A673 (cell line): ENCODE measurements at regions of chr4 and their contacts with region 1.

Region 1: DNA sequence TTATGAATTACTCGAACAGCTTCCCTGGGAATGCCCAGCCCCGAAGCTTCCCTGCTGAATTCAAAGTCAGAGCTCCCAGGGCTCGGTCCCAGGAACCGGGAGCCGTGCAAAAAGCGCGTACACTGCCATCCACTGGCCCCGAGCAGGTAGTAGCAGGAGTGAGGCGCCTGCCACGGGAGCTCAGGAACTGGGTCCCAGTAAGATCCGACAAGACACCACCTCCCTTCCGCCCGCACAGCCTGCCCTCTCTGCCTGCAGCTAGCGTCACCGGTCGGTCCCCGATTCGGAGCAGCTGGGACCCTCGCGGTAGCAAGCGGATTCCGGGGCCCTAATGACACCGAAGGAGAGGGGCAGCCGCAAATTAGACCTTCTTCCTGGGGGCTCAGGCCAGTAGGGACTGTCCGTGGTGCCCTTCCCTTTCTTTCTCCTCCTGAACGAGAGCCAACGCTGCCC is 1.2 kb downstream of the CORIN start:
- DNase-seq: peak; percentile 90
- H3K4me3 ChIP-seq: peak overlapping the region; percentile 51
- H3K27ac ChIP-seq: no peak overlapping the region
- H3K4me1 ChIP-seq: peaks cover 11% of the 10 kb centered on the region
- H3K27me3 ChIP-seq: no peaks in the 10 kb centered on the region
- CTCF ChIP-seq: peak; percentile 77

Region 2: DNA sequence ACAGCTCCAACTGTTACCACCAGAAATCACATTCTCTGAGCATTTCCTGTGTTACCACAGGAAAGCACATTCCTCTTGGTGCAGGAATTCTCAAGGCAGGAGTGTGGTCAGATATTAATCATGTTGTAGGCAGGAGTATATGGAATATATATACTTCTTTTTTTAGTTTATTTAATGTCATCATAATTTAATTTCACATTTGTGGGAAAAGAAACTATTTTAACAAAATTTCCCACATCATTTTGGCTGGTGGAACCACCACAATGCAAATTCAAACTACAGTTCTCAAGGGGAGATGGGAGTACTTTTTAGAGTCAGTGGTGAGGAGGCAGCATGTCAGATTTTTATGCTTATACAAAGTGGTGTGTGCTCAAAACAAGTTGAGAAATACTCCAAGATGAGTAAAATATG is 212.6 kb before region 1 on chr4:
- CTCF ChIA-PET with region 1: no interaction called
- POLR2A ChIA-PET with region 1: no interaction called
- intact Hi-C with region 1: no loop called
- DNase-seq: no peak
- H3K4me3 ChIP-seq: no peak overlapping the region
- H3K27ac ChIP-seq: no peak overlapping the region
- H3K4me1 ChIP-seq: no peaks in the 10 kb centered on the region
- H3K27me3 ChIP-seq: no peaks in the 10 kb centered on the region
- CTCF ChIP-seq: no peak

Region 3: GRCh38 chr4:47668810-47669408 is 167.8 kb before region 1 on chr4:
- CTCF ChIA-PET with region 1: interaction called, 13 read pairs
- POLR2A ChIA-PET with region 1: no interaction called
- intact Hi-C with region 1: loop called (anchors 5 kb)
- DNase-seq: peak; percentile 68
- H3K4me3 ChIP-seq: no peak overlapping the region
- H3K27ac ChIP-seq: no peak overlapping the region
- H3K4me1 ChIP-seq: no peaks in the 10 kb centered on the region
- H3K27me3 ChIP-seq: no peaks in the 10 kb centered on the region
- CTCF ChIP-seq: peak; percentile 86

Region 4: GRCh38 chr4:47686294-47686872 is 150.3 kb before region 1 on chr4:
- CTCF ChIA-PET with region 1: interaction called, 6 read pairs
- POLR2A ChIA-PET with region 1: no interaction called
- intact Hi-C with region 1: loop called (anchors 1 kb)
- DNase-seq: peak; percentile 63
- H3K4me3 ChIP-seq: no peak overlapping the region
- H3K27ac ChIP-seq: no peak overlapping the region
- H3K4me1 ChIP-seq: no peaks in the 10 kb centered on the region
- H3K27me3 ChIP-seq: no peaks in the 10 kb centered on the region
- CTCF ChIP-seq: peak; percentile 87

Region 5: DNA sequence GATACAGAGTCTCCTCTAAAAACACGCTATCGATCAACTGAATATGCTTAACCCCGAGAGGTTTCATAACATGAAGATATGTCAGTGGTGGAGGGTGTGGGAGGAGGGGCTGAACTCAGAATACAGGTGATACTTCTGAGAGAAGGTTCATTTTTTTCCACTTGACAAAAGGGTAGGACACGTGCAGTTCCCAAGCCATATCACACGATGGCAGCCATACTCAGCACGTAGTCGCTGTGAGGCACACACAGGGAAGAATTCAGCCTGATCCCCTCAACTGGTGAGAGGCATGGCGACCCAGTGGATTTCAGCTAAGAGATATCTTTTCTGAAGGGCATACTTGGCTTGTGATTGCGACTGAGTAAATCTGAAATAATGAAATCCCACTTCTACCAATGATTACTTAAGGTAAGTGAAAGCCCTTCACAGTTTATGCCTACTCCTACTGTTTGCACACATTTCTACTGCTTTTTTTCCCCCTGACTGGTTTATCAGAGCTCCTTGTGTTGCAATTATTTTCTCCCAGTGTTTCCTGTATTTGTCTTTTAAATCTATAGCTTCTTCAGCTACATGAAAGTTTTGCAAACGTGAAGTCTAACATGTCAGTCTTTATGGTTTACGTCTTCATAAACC is 131.9 kb before region 1 on chr4:
- CTCF ChIA-PET with region 1: interaction called, 28 read pairs
- POLR2A ChIA-PET with region 1: no interaction called
- intact Hi-C with region 1: loop called (anchors 1 kb)
- DNase-seq: peak; percentile 70
- H3K4me3 ChIP-seq: no peak overlapping the region
- H3K27ac ChIP-seq: no peak overlapping the region
- H3K4me1 ChIP-seq: peaks cover 25% of the 10 kb centered on the region
- H3K27me3 ChIP-seq: no peaks in the 10 kb centered on the region
- CTCF ChIP-seq: peak; percentile 68